ENCODE measurements at regions of chr6 and their contacts with region 1.

Region 1: DNA sequence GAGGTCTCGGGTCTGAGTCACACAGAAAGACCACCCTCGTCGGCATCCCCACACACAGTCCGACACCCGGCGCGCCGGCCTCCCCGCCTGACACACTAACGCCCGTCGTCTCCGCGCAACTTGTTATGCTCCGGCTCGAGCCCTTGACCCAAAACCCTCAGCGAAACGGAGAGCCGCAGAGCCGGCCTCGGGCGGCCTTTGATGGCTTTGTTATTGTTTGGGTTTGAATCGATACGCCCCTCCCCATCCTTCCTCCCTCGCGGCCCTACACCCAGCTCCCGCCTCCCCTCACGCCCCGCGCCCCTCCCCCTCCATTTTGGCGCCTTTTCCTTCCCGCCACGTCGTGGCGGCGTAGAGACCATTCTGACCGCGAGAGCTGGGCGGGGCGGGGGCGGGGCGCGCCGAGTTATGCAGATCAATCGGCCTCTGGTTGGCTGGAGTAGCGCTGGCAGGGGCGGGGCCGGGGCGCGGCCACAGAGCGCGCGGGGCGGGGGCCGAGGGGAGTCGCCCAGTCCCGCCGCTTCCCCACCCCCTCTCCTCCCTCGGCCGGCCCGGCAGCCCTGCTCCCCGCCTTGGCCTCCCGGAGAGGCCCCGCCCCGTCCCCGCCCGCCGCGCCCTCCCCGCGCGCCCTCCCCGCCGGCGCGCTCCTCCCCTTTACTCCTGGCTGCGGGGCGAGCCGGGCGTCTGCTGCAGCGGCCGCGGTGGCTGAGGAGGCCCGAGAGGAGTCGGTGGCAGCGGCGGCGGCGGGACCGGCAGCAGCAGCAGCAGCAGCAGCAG is at the start of gene PIM1:
- DNase-seq: peak; percentile 100
- ATAC-seq: peak; percentile 95 to 97
- H3K4me3 ChIP-seq: peak within 1 kb of the TSS; percentile 72
- H3K27ac ChIP-seq: peak within 1 kb of the TSS; percentile 99
- H3K4me1 ChIP-seq: peaks cover 3% of the 10 kb centered on the region
- H3K27me3 ChIP-seq: no peaks in the 10 kb centered on the region
- total RNA-seq, gene PIM1: 22.5 to 72.5 (median 32.1) TPM

Region 2: GRCh38 chr6:37029249-37029971 is 140.3 kb before region 1 on chr6:
- intact Hi-C with region 1: loop called in 2 of 4 experiments (anchors 10 kb)
- DNase-seq: peak; percentile 80 to 87 (median 84)
- ATAC-seq: peak; percentile 90 to 93
- H3K4me3 ChIP-seq: no peak overlapping the region
- H3K27ac ChIP-seq: no peak overlapping the region
- H3K4me1 ChIP-seq: no peaks in the 10 kb centered on the region
- H3K27me3 ChIP-seq: no peaks in the 10 kb centered on the region

Region 3: GRCh38 chr6:37051138-37052026 is 118.3 kb before region 1 on chr6:
- intact Hi-C with region 1: loop called (anchors 1 to 5 kb)
- DNase-seq: peak; percentile 91 to 97 (median 97)
- ATAC-seq: peak; percentile 85 to 86
- H3K4me3 ChIP-seq: no peak overlapping the region
- H3K27ac ChIP-seq: no peak overlapping the region
- H3K4me1 ChIP-seq: peaks cover 2% of the 10 kb centered on the region
- H3K27me3 ChIP-seq: no peaks in the 10 kb centered on the region

Region 4: DNA sequence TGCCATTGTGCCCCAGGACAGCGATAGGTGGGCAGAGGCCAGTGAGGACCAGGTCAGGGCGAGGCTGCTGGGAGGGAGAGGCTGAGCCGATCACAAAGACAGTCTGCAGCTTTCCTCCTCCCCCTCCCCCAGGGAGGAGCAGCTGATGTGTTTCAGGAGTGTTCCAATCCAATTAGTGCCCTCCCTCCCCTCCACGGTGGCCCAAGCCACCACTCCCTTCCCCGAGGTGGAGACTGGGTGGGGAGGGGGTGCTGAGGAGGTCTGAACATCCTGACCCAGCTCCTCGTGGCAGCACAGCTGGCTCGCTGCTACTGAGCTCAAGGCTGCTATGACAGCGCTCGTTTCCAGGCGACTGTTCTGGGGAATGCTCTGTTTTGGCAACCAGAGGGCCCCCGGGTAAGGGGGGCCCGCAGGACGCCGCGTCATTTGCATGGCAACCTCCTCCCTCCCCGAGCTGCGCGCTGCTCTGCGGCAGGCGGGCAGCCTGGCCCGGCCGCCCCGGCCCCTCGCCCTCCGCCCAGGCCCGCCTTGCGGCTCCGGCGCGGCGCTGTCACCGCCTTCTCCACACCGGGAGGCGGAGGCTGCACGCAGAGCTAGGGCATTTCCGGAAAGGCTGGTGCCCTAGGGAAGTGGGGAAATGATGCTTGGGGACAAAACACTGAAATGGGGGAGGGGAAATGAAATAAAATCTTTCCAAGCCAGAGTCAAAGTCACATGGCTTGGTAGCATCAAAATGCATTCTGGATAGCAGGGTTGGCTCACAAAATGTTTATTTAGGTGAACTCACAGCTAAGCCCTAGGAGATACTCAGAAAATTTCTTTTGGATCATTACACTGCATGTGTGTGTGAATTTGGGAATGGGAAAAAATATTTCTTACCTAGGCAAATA is 67.2 kb before region 1 on chr6:
- intact Hi-C with region 1: loop called in 1 of 4 experiments (anchors 2 kb)
- DNase-seq: peak; percentile 95 to 96 (median 96)
- ATAC-seq: peak; percentile 95 to 96
- H3K4me3 ChIP-seq: peak overlapping the region; percentile 41
- H3K27ac ChIP-seq: peak overlapping the region; percentile 83
- H3K4me1 ChIP-seq: peaks cover 8% of the 10 kb centered on the region
- H3K27me3 ChIP-seq: no peaks in the 10 kb centered on the region

Region 5: DNA sequence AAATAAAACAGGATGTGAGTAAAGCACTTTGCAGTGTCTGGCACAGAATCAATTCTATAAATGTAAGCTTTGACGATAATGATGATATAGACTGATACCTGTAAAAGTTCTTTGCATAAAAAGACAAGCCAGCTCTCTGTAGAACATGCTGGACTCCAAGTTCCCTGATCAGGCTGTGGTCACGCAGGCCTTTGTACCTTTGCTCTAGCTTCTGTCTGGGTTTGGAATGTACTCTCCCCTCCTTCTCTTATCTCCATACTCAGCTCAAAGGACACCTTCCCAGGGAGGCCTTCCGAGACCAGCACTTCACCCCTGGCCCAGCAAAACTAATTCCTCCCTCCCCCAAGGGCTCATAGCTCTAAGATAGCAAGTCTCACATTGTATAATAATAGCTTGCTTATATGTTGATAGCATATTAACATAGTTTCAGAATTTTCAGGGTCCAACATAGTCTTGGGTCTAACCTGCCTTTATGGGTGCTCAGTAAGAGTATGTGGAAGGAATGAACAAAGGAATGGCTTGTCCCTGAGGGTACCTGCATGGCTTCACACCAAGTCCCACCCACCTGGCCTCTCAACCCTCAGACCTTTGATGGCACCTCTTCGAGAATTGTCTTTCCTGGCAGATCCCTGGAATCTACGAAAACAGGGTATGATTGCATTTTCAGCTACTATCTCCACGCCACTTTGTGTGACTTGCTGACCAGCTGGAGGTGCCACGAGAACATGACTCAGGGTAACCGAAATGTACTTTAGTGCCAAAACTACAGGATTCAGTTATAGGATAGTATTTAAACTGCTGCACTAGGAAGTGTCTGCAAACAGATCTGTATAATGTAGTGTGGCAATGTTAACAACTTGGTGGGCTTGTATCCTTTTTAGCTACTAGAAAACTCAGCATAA is 41.5 kb before region 1 on chr6:
- intact Hi-C with region 1: loop called in 1 of 4 experiments (anchors 5 kb)
- DNase-seq: peak in 2 of 3 donors; percentile 23 to 49
- ATAC-seq: peak; percentile 65 to 70
- H3K4me3 ChIP-seq: no peak overlapping the region
- H3K27ac ChIP-seq: peak overlapping the region; percentile 98
- H3K4me1 ChIP-seq: peaks cover 9% of the 10 kb centered on the region
- H3K27me3 ChIP-seq: no peaks in the 10 kb centered on the region

Region 6: GRCh38 chr6:37207903-37208456 is 38.3 kb after region 1 on chr6:
- intact Hi-C with region 1: loop called in 1 of 4 experiments (anchors 5 kb)
- DNase-seq: peak; percentile 82 to 91 (median 87)
- ATAC-seq: peak; percentile 64 to 71
- H3K4me3 ChIP-seq: no peak overlapping the region
- H3K27ac ChIP-seq: no peak overlapping the region
- H3K4me1 ChIP-seq: no peaks in the 10 kb centered on the region
- H3K27me3 ChIP-seq: no peaks in the 10 kb centered on the region

Region 7: GRCh38 chr6:37324131-37325033 is 154.7 kb after region 1 on chr6:
- intact Hi-C with region 1: no loop called
- DNase-seq: no peak
- ATAC-seq: no peak
- H3K4me3 ChIP-seq: no peak overlapping the region
- H3K27ac ChIP-seq: no peak overlapping the region
- H3K4me1 ChIP-seq: no peaks in the 10 kb centered on the region
- H3K27me3 ChIP-seq: no peaks in the 10 kb centered on the region